Natural killer cell (primary cell): ENCODE measurements at regions of chr15 and their contacts with region 1.

Region 1: GRCh38 chr15:63891079-63891767 is 57.5 kb upstream of the HERC1 start:
- DNase-seq: peak; percentile 69 to 88
- ATAC-seq: peak; percentile 19 to 48 (median 27)
- H3K4me3 ChIP-seq: no peak overlapping the region
- H3K4me3 Mint-ChIP-seq: no peak overlapping the region
- H3K27ac ChIP-seq: no peak overlapping the region
- H3K27ac Mint-ChIP-seq: peak overlapping the region in 1 of 2 donors; percentile 77
- H3K4me1 ChIP-seq: peaks cover 58% of the 10 kb centered on the region
- H3K4me1 Mint-ChIP-seq: peaks cover 49 to 56% of the 10 kb centered on the region in 2 donors
- H3K27me3 ChIP-seq: no peaks in the 10 kb centered on the region
- H3K27me3 Mint-ChIP-seq: no peaks in the 10 kb centered on the region
- CTCF ChIP-seq: peak; percentile 88

Region 2: GRCh38 chr15:63019539-63020109 is 871.6 kb before region 1 on chr15:
- intact Hi-C with region 1: no loop called
- DNase-seq: no peak
- ATAC-seq: no peak
- H3K4me3 ChIP-seq: no peak overlapping the region
- H3K4me3 Mint-ChIP-seq: no peak overlapping the region
- H3K27ac ChIP-seq: no peak overlapping the region
- H3K27ac Mint-ChIP-seq: no peak overlapping the region
- H3K4me1 ChIP-seq: no peaks in the 10 kb centered on the region
- H3K4me1 Mint-ChIP-seq: no peaks in the 10 kb centered on the region
- H3K27me3 ChIP-seq: no peaks in the 10 kb centered on the region
- H3K27me3 Mint-ChIP-seq: no peaks in the 10 kb centered on the region
- CTCF ChIP-seq: no peak

Region 3: GRCh38 chr15:63497642-63498467 is 393.4 kb before region 1 on chr15:
- intact Hi-C with region 1: loop called (anchors 5 kb)
- DNase-seq: peak; percentile 73 to 92
- ATAC-seq: peak; percentile 70 to 92 (median 85)
- H3K4me3 ChIP-seq: peak overlapping the region; percentile 10
- H3K4me3 Mint-ChIP-seq: no peak overlapping the region
- H3K27ac ChIP-seq: peak overlapping the region; percentile 99
- H3K27ac Mint-ChIP-seq: no peak overlapping the region
- H3K4me1 ChIP-seq: peaks cover 88% of the 10 kb centered on the region
- H3K4me1 Mint-ChIP-seq: peaks cover 34 to 64% of the 10 kb centered on the region in 2 donors
- H3K27me3 ChIP-seq: no peaks in the 10 kb centered on the region
- H3K27me3 Mint-ChIP-seq: no peaks in the 10 kb centered on the region
- CTCF ChIP-seq: no peak

Region 4: DNA sequence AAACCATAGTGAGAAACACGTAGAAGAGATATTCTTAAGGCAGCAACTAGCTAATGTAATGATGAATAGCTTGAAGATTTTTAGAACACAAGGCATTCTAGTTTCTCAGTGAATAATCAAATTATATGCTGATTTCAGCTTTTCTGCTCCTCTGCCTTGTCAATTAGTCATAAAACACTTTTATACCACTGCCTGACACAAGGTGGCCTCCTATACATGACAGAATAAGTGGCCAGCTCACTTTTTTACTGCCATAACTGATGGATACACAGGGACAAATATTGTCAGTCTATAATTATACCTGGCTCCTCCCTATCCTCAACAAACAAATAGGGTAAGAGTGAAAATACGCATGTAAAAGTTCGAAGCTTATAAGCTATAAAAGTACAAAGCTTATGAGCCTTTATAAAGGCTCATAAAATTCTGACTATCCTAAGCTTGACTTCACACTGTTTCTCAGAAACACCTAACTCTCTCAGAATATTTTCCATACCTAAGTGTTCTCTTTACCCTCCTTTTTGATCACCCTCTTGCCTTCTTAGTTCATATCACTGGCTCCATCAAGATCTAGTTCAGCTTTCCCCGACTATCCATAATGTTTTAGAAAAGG is 139.0 kb before region 1 on chr15:
- intact Hi-C with region 1: loop called (anchors 2 kb)
- DNase-seq: peak in 1 of 2 donors; percentile 73
- ATAC-seq: peak; percentile 78 to 94 (median 84)
- H3K4me3 ChIP-seq: no peak overlapping the region
- H3K4me3 Mint-ChIP-seq: no peak overlapping the region
- H3K27ac ChIP-seq: no peak overlapping the region
- H3K27ac Mint-ChIP-seq: peak overlapping the region in 1 of 2 donors; percentile 12
- H3K4me1 ChIP-seq: no peaks in the 10 kb centered on the region
- H3K4me1 Mint-ChIP-seq: no peaks in the 10 kb centered on the region
- H3K27me3 ChIP-seq: no peaks in the 10 kb centered on the region
- H3K27me3 Mint-ChIP-seq: no peaks in the 10 kb centered on the region
- CTCF ChIP-seq: peak; percentile 74

Region 5: GRCh38 chr15:63826528-63826927 is 64.7 kb before region 1 on chr15:
- intact Hi-C with region 1: loop called (anchors 2 kb)
- DNase-seq: peak in 1 of 2 donors; percentile 72
- ATAC-seq: peak in 2 of 3 donors; percentile 61 to 64
- H3K4me3 ChIP-seq: no peak overlapping the region
- H3K4me3 Mint-ChIP-seq: no peak overlapping the region
- H3K27ac ChIP-seq: no peak overlapping the region
- H3K27ac Mint-ChIP-seq: peak overlapping the region; percentile 1 to 67
- H3K4me1 ChIP-seq: peaks cover 7% of the 10 kb centered on the region
- H3K4me1 Mint-ChIP-seq: peaks cover 80 to 82% of the 10 kb centered on the region in 2 donors
- H3K27me3 ChIP-seq: no peaks in the 10 kb centered on the region
- H3K27me3 Mint-ChIP-seq: no peaks in the 10 kb centered on the region
- CTCF ChIP-seq: peak; percentile 47

Region 6: GRCh38 chr15:63833021-63833696 is 58.1 kb before region 1 on chr15:
- intact Hi-C with region 1: loop called (anchors 2 kb)
- DNase-seq: peak; percentile 50 to 51
- ATAC-seq: peak; percentile 51 to 71 (median 55)
- H3K4me3 ChIP-seq: peak overlapping the region; percentile 80
- H3K4me3 Mint-ChIP-seq: peak overlapping the region; percentile 98
- H3K27ac ChIP-seq: peak overlapping the region; percentile 85
- H3K27ac Mint-ChIP-seq: peak overlapping the region; percentile 95 to 98
- H3K4me1 ChIP-seq: peaks cover 14% of the 10 kb centered on the region
- H3K4me1 Mint-ChIP-seq: peaks cover 54 to 62% of the 10 kb centered on the region in 2 donors
- H3K27me3 ChIP-seq: no peaks in the 10 kb centered on the region
- H3K27me3 Mint-ChIP-seq: peaks cover 0 to 7% of the 10 kb centered on the region in 2 donors
- CTCF ChIP-seq: no peak

Region 7: DNA sequence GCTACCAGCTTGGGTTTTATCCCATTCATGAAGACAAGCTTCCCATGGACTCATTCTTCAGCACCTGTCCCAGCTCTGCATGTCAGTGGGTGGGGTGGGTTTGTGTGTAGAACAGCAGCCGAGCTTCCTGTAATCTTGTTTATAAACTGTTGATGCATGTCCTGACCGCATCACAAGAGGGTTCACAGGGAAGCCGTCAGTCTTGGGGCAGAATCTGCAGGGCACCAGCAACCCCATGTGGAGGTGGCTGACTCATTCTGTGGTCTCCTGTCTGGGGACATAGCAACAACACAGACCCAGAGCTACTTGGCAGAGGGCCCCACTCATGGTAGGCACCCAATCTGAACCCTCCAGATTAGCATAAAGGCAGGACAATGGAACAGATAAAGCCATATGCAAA is 119.5 kb after region 1 on chr15:
- intact Hi-C with region 1: loop called (anchors 1 kb)
- DNase-seq: peak; percentile 76 to 95
- ATAC-seq: peak; percentile 86 to 96 (median 95)
- H3K4me3 ChIP-seq: no peak overlapping the region
- H3K4me3 Mint-ChIP-seq: peak overlapping the region; percentile 87
- H3K27ac ChIP-seq: peak overlapping the region; percentile 86
- H3K27ac Mint-ChIP-seq: peak overlapping the region; percentile 96 to 98
- H3K4me1 ChIP-seq: peaks cover 29% of the 10 kb centered on the region
- H3K4me1 Mint-ChIP-seq: peaks cover 39 to 40% of the 10 kb centered on the region in 2 donors
- H3K27me3 ChIP-seq: no peaks in the 10 kb centered on the region
- H3K27me3 Mint-ChIP-seq: no peaks in the 10 kb centered on the region
- CTCF ChIP-seq: no peak

Region 8: DNA sequence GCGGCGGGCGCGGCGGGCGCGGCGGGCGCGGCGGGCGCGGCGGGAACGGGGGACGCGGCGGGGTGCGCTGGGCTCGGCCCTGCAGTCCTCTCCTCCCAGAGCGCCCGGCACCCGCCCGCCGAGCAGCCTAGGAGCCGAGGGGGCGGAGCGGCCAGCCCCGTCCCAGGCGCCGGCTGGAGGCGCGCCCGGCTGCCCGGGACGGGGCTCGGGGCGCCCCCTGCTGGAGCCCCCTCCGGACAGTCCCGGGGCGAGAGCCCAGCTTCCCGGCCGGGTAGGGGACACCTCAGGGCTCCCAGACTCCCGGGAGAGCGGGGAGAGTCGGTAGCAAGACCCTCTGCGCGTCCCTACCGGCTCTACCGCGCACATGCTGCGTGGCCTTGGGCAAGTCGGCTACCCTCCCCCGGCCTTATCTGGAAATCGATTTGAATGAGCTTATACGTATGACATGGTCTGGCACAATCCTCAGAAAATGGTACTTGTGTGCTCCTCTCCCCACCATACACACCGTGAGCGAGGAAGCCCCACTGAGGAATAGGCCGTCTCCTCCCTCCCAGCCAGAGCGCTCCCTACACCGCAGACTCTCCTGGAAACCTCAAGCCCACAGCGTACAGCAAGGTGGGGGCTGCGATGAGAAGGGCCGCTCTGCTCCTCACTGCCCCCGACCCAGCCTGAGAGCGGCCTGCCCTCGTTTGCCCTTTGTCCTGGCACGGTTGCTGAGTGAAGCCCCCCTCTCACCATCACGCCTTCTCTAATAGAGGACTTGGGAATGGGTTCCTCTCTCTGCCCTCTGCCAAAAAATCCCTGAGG is 155.3 kb after region 1 on chr15 and contains the start of gene DAPK2:
- intact Hi-C with region 1: loop called (anchors 10 kb)
- DNase-seq: peak; percentile 70 to 84
- ATAC-seq: peak; percentile 92 to 93 (median 92)
- H3K4me3 ChIP-seq: peak within 1 kb of the TSS; percentile 38
- H3K4me3 Mint-ChIP-seq: peak within 1 kb of the TSS; percentile 82
- H3K27ac ChIP-seq: no peak within 1 kb of the TSS
- H3K27ac Mint-ChIP-seq: peak within 1 kb of the TSS in 1 of 2 donors; percentile 56
- H3K4me1 ChIP-seq: peaks cover 33% of the 10 kb centered on the region
- H3K4me1 Mint-ChIP-seq: peaks cover 0 to 11% of the 10 kb centered on the region in 2 donors
- H3K27me3 ChIP-seq: peaks cover 2% of the 10 kb centered on the region
- H3K27me3 Mint-ChIP-seq: peaks cover 18 to 19% of the 10 kb centered on the region in 2 donors
- CTCF ChIP-seq: peak; percentile 77
- total RNA-seq, gene DAPK2: 3.7 to 25.3 (median 6.0) TPM